Dendritic cell treated with granulocyte-macrophage colony-stimulating factor and Interleukin-4, amounts not matched to agents 40 ng/mL and 50 ng/mL, for 4 days (primary cell): ENCODE measurements at regions of chr12 and their contacts with region 1.

Region 1: GRCh38 chr12:100234598-100235304 is 32.1 kb downstream of the DEPDC4 start:
- H3K4me3 Mint-ChIP-seq: no peak overlapping the region
- H3K27ac Mint-ChIP-seq: no peak overlapping the region
- H3K4me1 Mint-ChIP-seq: peaks cover 5% of the 10 kb centered on the region
- H3K27me3 Mint-ChIP-seq: no peaks in the 10 kb centered on the region

Region 2: GRCh38 chr12:100329800-100330199 is 95.0 kb after region 1 on chr12:
- intact Hi-C with region 1: loop called (anchors 10 kb)
- H3K4me3 Mint-ChIP-seq: no peak overlapping the region
- H3K27ac Mint-ChIP-seq: no peak overlapping the region
- H3K4me1 Mint-ChIP-seq: no peaks in the 10 kb centered on the region
- H3K27me3 Mint-ChIP-seq: no peaks in the 10 kb centered on the region

Region 3: DNA sequence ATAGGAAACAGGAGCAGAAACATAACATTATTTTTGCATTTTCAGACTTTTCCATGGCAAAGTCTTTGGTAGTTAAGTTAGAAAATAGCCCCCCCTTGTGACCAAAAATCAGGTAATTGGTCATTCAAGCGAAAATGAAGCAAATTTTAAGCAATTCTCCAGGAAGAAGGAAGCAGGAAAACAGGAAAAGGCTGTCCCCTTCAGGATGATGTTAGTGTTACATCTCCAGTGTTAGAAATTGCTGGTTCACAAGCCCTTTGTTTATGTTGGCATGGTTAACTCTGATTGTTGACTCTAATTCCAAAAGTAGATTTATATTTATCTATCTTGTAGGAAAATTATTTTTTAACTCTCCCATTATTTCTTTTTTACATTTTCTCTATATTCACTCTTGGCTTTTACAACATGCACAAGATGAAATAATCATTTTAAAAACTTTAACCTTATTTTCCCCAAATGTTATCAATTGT is 319.9 kb after region 1 on chr12:
- intact Hi-C with region 1: loop called (anchors 2 kb)
- H3K4me3 Mint-ChIP-seq: no peak overlapping the region
- H3K27ac Mint-ChIP-seq: no peak overlapping the region
- H3K4me1 Mint-ChIP-seq: peaks cover 13% of the 10 kb centered on the region
- H3K27me3 Mint-ChIP-seq: peaks cover 5% of the 10 kb centered on the region

Region 4: GRCh38 chr12:100733817-100734593 is 499.3 kb after region 1 on chr12:
- intact Hi-C with region 1: loop called (anchors 5 kb)
- H3K4me3 Mint-ChIP-seq: no peak overlapping the region
- H3K27ac Mint-ChIP-seq: no peak overlapping the region
- H3K4me1 Mint-ChIP-seq: no peaks in the 10 kb centered on the region
- H3K27me3 Mint-ChIP-seq: peaks cover 22% of the 10 kb centered on the region